ENCODE measurements at regions of chr2 and their contacts with region 1.

Region 1: GRCh38 chr2:121649596-121650314 is 493 bp upstream of the CLASP1 start:
- DNase-seq: peak; percentile 97
- H3K4me3 ChIP-seq: peak overlapping the region; percentile 90
- H3K27ac ChIP-seq: peak overlapping the region; percentile 85
- H3K4me1 ChIP-seq: peaks cover 38% of the 10 kb centered on the region
- CTCF ChIP-seq: no peak

Region 2: GRCh38 chr2:121596221-121597080 is 53.3 kb before region 1 on chr2:
- CTCF ChIA-PET with region 1: interaction called, 3 read pairs
- POLR2A ChIA-PET with region 1: interaction called, 9 read pairs
- intact Hi-C with region 1: loop called (anchors 2 kb)
- DNase-seq: peak; percentile 80
- H3K4me3 ChIP-seq: peak overlapping the region; percentile 60
- H3K27ac ChIP-seq: peak overlapping the region; percentile 85
- H3K4me1 ChIP-seq: peaks cover 36% of the 10 kb centered on the region
- CTCF ChIP-seq: peak; percentile 84

Region 3: DNA sequence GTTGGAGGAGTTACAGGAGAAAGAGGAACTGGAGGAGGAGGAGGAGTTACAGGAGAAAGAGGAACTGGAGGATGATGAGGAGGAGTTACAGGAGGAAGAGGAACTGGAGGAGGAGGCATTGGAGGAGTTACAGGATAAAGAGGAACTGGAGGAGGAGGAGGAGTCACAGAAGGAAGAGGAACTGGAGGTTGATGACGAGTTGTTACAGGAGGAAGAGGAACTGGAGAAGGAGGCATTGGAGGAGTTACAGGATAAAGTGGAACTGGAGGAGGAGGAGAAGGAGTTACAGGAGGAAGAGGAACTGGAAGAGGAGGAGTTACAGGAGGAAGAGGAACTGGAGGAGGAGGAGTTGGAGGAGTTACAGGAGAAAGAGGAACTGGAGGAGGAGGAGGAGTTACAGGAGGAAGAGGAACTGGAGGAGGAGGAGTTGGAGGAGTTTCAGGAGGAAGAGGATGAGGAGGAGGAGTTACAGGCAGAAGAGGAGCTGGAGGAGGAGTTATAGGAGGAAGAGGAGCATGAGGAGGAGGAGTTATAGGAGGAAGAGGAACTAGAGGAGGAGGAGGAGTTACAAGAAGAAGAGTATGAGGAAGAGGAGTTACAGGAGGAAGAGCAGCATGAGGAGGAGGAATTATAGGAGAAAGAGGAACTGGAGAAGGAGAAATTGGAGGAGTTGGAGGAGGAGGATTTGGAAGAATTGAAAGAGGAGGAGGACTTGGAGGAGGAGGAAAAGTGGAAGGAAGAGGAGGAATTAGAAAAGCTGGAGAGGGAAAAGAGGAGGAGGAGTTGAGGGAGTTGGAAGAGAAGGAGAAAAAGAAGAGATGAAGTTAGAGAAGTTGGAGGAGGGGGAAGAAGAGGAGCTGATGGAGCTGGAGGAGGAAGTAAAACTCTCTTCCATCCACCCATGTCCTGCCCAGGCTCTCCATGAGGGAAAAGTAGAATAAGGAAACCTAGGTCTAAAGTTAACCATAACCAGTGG is 37.7 kb before region 1 on chr2:
- CTCF ChIA-PET with region 1: interaction called, 3 read pairs
- POLR2A ChIA-PET with region 1: interaction called, 4 read pairs
- intact Hi-C with region 1: loop called (anchors 2 kb)
- DNase-seq: no peak
- H3K4me3 ChIP-seq: no peak overlapping the region
- H3K27ac ChIP-seq: no peak overlapping the region
- H3K4me1 ChIP-seq: peaks cover 6% of the 10 kb centered on the region
- CTCF ChIP-seq: no peak

Region 4: GRCh38 chr2:121699421-121700333 is 49.9 kb after region 1 on chr2:
- CTCF ChIA-PET with region 1: no interaction called
- POLR2A ChIA-PET with region 1: no interaction called
- intact Hi-C with region 1: no loop called
- DNase-seq: peak; percentile 40
- H3K4me3 ChIP-seq: no peak overlapping the region
- H3K27ac ChIP-seq: no peak overlapping the region
- H3K4me1 ChIP-seq: peaks cover 7% of the 10 kb centered on the region
- CTCF ChIP-seq: no peak

Region 5: GRCh38 chr2:122261911-122262310 is 612.2 kb after region 1 on chr2:
- CTCF ChIA-PET with region 1: no interaction called
- POLR2A ChIA-PET with region 1: no interaction called
- intact Hi-C with region 1: no loop called
- DNase-seq: no peak
- H3K4me3 ChIP-seq: no peak overlapping the region
- H3K27ac ChIP-seq: no peak overlapping the region
- H3K4me1 ChIP-seq: no peaks in the 10 kb centered on the region
- CTCF ChIP-seq: no peak